Heart left ventricle (tissue), 16 donors: ENCODE measurements at regions of chr17 and their contacts with region 1.

Region 1: DNA sequence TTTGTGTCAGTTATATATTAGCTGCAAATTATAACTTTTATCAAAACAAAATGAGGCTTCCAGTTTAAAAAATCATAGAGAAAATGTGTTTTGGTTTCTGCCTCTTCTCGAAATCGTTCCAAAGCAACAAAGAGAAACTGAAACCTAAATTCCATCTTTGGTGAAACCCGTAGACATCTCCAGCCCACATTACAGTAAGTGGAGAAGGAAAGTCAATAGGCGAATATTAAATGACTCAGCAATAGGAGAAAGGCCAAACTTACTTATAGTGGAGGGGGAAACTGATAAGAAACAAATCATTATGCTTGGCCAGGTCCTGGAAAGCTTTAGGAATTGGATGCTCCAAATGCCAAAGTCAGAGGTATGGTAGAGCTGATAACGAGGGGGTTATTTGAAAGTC is 103.0 kb upstream of the SHISA6 start:
- DNase-seq: no peak
- ATAC-seq: no peak
- H3K4me3 ChIP-seq: peak overlapping the region in 6 of 12 donors; percentile 9 to 46 (median 34)
- H3K27ac ChIP-seq: no peak overlapping the region
- H3K4me1 ChIP-seq: peaks cover 0 to 3% (median 0%) of the 10 kb centered on the region in 12 donors
- H3K27me3 ChIP-seq: no peaks in the 10 kb centered on the region
- CTCF ChIP-seq: no peak
- POLR2A ChIP-seq: no peak

Region 2: GRCh38 chr17:11195801-11196200 is 57.8 kb after region 1 on chr17:
- intact Hi-C with region 1: loop called in 1 of 10 experiments (anchors 10 kb)
- DNase-seq: no peak
- ATAC-seq: no peak
- H3K4me3 ChIP-seq: no peak overlapping the region
- H3K27ac ChIP-seq: no peak overlapping the region
- H3K4me1 ChIP-seq: no peaks in the 10 kb centered on the region
- H3K27me3 ChIP-seq: peaks cover 0 to 3% (median 0%) of the 10 kb centered on the region in 9 donors
- CTCF ChIP-seq: no peak
- POLR2A ChIP-seq: no peak